CD4-positive, alpha-beta T cell (primary cell): ENCODE measurements at regions of chr10 and their contacts with region 1.

Region 1: DNA sequence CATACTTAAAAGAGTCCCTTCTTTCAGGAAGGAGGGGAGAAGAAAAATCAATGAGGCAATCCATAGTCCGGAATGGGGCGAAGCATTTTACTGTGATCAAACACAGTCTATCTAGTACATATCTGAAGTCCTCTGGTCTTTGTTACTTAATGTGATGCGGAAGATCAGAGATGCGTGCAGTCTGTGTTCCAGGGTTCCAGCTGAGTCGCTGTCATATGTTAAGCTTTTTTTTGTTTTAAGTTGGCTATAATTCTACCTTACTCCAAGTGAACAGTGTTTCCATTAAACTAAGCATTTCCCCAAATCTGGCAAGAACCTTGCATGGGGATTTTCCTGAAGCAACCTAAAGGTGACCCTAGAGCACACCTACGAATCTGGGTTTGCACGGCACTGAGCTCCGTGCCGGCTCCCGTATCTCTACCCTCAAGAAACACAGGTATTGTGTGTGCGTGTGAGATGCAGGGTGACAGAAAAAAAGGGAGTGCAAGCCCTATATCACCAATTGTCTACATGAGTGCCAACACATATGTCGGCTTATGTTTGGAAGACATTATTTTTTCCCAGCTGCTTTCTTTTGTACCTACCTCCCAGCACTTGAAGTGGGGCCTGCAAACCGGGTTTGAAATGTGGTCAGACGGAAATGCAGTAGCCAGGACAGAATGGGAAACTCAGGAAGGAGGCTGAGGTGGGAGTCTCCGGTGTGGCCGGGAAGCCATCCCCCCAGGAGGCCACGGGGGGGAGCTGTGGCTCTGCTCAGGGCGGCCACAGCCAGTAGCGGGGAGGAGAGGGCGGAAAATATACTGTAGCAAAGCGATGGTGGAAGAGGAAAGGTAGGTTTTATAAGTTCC is 435.8 kb upstream of the MGMT start:
- DNase-seq: peak in 13 of 14 experiments; percentile 20 to 76 (median 42)
- ATAC-seq: peak; percentile 45
- H3K4me3 ChIP-seq: no peak overlapping the region
- H3K4me3 Mint-ChIP-seq: no peak overlapping the region
- H3K27ac ChIP-seq: no peak overlapping the region
- H3K27ac Mint-ChIP-seq: no peak overlapping the region
- H3K4me1 ChIP-seq: peaks cover 11% of the 10 kb centered on the region
- H3K4me1 Mint-ChIP-seq: peaks cover 37% of the 10 kb centered on the region
- H3K27me3 ChIP-seq: no peaks in the 10 kb centered on the region
- H3K27me3 Mint-ChIP-seq: peaks cover 28% of the 10 kb centered on the region
- CTCF ChIP-seq: peak; percentile 82

Region 2: DNA sequence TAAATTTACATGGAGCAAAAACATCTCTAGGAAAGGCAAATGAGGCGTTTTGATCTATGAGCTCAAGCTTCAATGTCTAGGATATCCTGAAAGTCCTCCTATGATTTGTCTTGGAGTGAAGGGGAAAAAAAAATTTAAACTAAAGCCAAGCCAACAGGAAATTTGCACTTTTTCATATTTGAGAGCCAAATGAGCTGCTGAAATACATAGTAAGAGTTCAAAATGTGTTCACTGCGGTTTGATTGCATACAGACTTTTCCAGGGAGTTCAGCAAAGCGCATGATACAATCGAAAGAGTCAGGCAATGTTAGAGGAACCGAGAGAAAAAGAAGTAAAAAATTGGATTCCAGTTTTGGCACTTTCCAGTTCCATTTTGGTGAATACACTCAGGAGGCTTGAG is 197.5 kb before region 1 on chr10:
- CTCF ChIA-PET with region 1: no interaction called
- POLR2A ChIA-PET with region 1: no interaction called
- intact Hi-C with region 1: no loop called
- DNase-seq: no peak
- ATAC-seq: no peak
- H3K4me3 ChIP-seq: no peak overlapping the region
- H3K4me3 Mint-ChIP-seq: no peak overlapping the region
- H3K27ac ChIP-seq: no peak overlapping the region
- H3K27ac Mint-ChIP-seq: no peak overlapping the region
- H3K4me1 ChIP-seq: no peaks in the 10 kb centered on the region
- H3K4me1 Mint-ChIP-seq: no peaks in the 10 kb centered on the region
- H3K27me3 ChIP-seq: no peaks in the 10 kb centered on the region
- H3K27me3 Mint-ChIP-seq: no peaks in the 10 kb centered on the region
- CTCF ChIP-seq: no peak

Region 3: DNA sequence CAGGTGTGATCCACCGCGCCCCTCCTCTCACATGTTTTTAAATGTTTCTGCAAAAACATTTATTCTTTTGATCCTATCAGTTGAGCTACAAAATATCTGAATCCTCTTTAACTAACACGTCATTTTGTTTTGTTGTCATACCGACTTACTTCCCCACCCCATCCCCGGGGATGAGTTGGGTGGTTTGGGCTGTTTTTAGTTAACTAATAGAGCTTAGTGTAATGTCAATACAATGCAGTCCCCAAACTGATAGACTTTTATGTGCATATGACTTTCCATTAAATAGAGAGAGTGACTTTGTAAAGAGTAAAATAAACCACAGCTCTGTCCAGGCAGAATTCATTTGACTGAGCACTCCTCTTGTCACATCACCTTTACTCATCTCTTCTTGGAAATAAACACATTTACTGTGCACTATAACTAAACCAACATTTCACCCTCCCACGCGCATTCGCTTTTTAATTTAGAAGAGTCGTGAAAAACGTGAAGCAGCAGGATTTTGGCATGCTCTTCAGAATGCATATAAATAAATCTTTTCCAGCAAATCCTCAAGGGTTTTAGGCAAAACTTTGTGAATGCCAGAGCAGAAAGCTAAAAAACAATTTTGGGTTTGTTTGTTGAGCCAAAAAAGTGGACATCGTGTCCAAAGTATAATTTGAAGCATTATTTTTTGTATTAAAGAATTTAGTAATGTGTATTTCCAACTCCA is 248.4 kb after region 1 on chr10:
- CTCF ChIA-PET with region 1: no interaction called
- POLR2A ChIA-PET with region 1: no interaction called
- intact Hi-C with region 1: no loop called
- DNase-seq: no peak
- ATAC-seq: no peak
- H3K4me3 ChIP-seq: no peak overlapping the region
- H3K4me3 Mint-ChIP-seq: no peak overlapping the region
- H3K27ac ChIP-seq: no peak overlapping the region
- H3K27ac Mint-ChIP-seq: no peak overlapping the region
- H3K4me1 ChIP-seq: no peaks in the 10 kb centered on the region
- H3K4me1 Mint-ChIP-seq: no peaks in the 10 kb centered on the region
- H3K27me3 ChIP-seq: peaks cover 0 to 2% of the 10 kb centered on the region in 2 experiments
- H3K27me3 Mint-ChIP-seq: peaks cover 18% of the 10 kb centered on the region
- CTCF ChIP-seq: no peak

Region 4: GRCh38 chr10:129332476-129332875 is 301.3 kb after region 1 on chr10:
- CTCF ChIA-PET with region 1: interaction called, 4 read pairs
- POLR2A ChIA-PET with region 1: no interaction called
- intact Hi-C with region 1: loop called (anchors 1 kb)
- DNase-seq: peak in 5 of 14 experiments; percentile 6 to 49 (median 30)
- ATAC-seq: no peak
- H3K4me3 ChIP-seq: no peak overlapping the region
- H3K4me3 Mint-ChIP-seq: no peak overlapping the region
- H3K27ac ChIP-seq: no peak overlapping the region
- H3K27ac Mint-ChIP-seq: no peak overlapping the region
- H3K4me1 ChIP-seq: no peaks in the 10 kb centered on the region
- H3K4me1 Mint-ChIP-seq: no peaks in the 10 kb centered on the region
- H3K27me3 ChIP-seq: no peaks in the 10 kb centered on the region
- H3K27me3 Mint-ChIP-seq: peaks cover 23% of the 10 kb centered on the region
- CTCF ChIP-seq: peak; percentile 45

Region 5: DNA sequence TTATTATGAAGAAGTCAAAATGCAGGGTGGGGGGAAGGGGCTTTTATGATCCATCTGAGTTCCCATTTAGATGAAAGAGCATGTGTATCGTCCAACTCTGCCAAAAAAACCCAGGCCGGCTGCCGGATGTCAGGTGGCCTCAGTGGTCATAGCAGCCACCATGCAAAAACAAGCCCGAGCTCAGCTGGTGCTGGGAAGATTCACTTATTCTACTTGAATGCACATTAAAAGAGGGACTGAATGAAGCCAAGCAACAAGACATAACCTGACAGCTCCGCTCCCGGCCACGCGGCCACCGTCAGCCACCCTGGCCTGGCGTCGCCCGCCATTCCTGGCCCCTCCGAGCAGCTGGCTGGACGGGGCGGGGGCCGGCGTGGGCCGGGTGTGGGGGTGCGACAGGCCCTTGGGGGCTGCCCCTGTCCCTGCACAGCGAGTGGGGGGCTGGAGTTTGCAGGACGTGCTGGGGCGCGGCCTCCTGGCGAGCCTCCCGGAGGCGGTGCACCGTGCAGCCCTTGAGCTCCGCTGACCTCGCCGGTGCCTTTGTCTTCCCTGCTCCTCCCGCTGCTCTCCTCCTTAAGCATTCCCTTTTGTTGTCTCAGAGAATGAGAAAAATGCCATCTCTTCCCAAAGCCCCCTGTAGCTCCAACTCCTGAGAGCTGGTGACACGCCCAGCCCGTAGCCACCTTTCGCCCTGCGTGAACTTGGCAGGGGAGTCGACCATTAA is 865.1 kb after region 1 on chr10:
- CTCF ChIA-PET with region 1: no interaction called
- POLR2A ChIA-PET with region 1: no interaction called
- intact Hi-C with region 1: loop called in 1 of 2 experiments (anchors 10 kb)
- DNase-seq: no peak
- ATAC-seq: no peak
- H3K4me3 ChIP-seq: no peak overlapping the region
- H3K4me3 Mint-ChIP-seq: no peak overlapping the region
- H3K27ac ChIP-seq: no peak overlapping the region
- H3K27ac Mint-ChIP-seq: no peak overlapping the region
- H3K4me1 ChIP-seq: no peaks in the 10 kb centered on the region
- H3K4me1 Mint-ChIP-seq: no peaks in the 10 kb centered on the region
- H3K27me3 ChIP-seq: peaks cover 2 to 15% of the 10 kb centered on the region in 2 experiments
- H3K27me3 Mint-ChIP-seq: peaks cover 40% of the 10 kb centered on the region
- CTCF ChIP-seq: no peak

Region 6: DNA sequence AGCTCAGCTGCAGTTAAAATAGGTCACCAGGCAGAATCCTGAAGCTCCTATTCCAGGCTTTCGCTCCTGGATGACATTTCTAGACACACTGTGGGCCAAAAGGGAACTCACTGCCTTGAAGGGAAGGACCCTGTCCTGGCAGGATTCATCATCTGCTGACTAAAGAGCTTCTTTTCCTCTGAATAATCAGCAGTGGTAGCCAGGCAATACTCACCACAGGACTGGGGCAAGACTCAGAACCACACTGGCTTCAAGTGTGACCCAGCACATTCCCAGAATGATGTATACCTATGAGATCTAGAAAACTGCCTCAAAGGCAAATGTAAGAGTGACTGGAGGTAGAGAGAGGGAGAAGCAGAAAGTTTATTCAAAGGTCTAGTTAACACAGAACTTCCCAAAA is 962.4 kb after region 1 on chr10:
- CTCF ChIA-PET with region 1: no interaction called
- POLR2A ChIA-PET with region 1: no interaction called
- intact Hi-C with region 1: no loop called
- DNase-seq: no peak
- ATAC-seq: no peak
- H3K4me3 ChIP-seq: no peak overlapping the region
- H3K4me3 Mint-ChIP-seq: no peak overlapping the region
- H3K27ac ChIP-seq: no peak overlapping the region
- H3K27ac Mint-ChIP-seq: no peak overlapping the region
- H3K4me1 ChIP-seq: no peaks in the 10 kb centered on the region
- H3K4me1 Mint-ChIP-seq: no peaks in the 10 kb centered on the region
- H3K27me3 ChIP-seq: peaks cover 3 to 5% of the 10 kb centered on the region in 2 experiments
- H3K27me3 Mint-ChIP-seq: peaks cover 70% of the 10 kb centered on the region
- CTCF ChIP-seq: no peak

Region 7: DNA sequence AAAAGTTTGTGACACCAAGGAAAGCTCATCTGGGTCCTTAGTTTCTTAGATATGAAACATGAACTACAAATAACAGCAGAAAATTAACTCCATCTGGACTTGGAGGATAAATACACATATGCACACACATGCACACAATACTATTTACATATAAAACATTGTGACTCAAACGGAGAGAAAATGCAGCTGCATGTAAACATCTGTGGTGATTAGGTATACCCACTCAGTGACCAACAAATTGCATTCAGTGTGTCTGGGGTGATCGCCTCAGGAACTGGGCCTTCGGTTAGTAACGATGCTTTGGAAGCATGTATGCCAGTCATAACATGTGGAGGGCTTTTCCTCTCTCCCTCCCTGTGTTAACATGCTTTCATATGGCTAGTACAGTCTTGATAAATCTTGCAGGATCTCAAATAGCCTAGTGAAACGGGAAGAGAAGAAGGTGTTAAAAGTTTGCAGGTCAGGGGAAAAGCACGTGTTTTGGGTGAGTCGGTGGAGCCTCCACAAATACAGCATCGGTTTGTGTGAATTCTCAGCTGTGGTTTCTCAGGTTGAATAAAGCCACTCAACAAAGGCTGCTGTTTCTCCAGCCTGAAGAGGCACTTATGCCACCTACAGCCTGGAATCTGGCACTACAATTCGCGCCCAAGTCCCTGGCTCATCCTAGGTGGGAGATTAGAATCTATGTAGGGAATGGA is 1096.3 kb after region 1 on chr10:
- CTCF ChIA-PET with region 1: no interaction called
- POLR2A ChIA-PET with region 1: interaction called, 3 read pairs
- intact Hi-C with region 1: loop called (anchors 1 to 5 kb)
- DNase-seq: peak in 13 of 14 experiments; percentile 29 to 80 (median 39)
- ATAC-seq: peak; percentile 93
- H3K4me3 ChIP-seq: no peak overlapping the region
- H3K4me3 Mint-ChIP-seq: no peak overlapping the region
- H3K27ac ChIP-seq: no peak overlapping the region
- H3K27ac Mint-ChIP-seq: no peak overlapping the region
- H3K4me1 ChIP-seq: peaks cover 4% of the 10 kb centered on the region
- H3K4me1 Mint-ChIP-seq: peaks cover 5% of the 10 kb centered on the region
- H3K27me3 ChIP-seq: peaks cover 7 to 17% of the 10 kb centered on the region in 2 experiments
- H3K27me3 Mint-ChIP-seq: peaks cover 33% of the 10 kb centered on the region
- CTCF ChIP-seq: peak; percentile 92

Region 8: DNA sequence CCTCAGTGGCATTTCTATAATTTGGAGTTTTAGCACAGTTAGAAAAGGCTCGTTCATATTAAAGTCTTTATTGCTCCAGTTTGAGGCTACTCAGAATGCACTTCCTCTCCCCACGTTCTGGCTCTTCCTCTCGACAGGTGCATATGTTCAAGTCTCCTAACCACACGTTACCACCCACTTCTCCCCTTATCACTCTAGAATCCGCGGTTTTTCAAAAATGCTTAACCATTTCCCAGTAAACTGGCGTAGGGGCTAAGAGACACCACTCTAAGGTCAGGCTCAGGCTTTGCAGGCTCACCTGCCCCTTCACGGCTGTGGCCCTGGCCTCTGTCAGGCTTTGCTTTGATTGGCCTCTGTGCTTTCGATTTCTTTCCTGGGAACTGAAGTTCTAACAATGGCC is 1488.6 kb after region 1 on chr10:
- CTCF ChIA-PET with region 1: no interaction called
- POLR2A ChIA-PET with region 1: no interaction called
- intact Hi-C with region 1: no loop called
- DNase-seq: no peak
- ATAC-seq: no peak
- H3K4me3 ChIP-seq: no peak overlapping the region
- H3K4me3 Mint-ChIP-seq: no peak overlapping the region
- H3K27ac ChIP-seq: no peak overlapping the region
- H3K27ac Mint-ChIP-seq: no peak overlapping the region
- H3K4me1 ChIP-seq: no peaks in the 10 kb centered on the region
- H3K4me1 Mint-ChIP-seq: no peaks in the 10 kb centered on the region
- H3K27me3 ChIP-seq: no peaks in the 10 kb centered on the region
- H3K27me3 Mint-ChIP-seq: no peaks in the 10 kb centered on the region
- CTCF ChIP-seq: no peak